ENCODE measurements at regions of chr19 and their contacts with region 1.

Region 1: GRCh38 chr19:41541990-41542584 is 33.9 kb upstream of the CEACAM21 start:
- DNase-seq: peak; percentile 51 to 77 (median 71)
- ATAC-seq: peak in 1 of 2 donors; percentile 35
- H3K4me3 ChIP-seq: no peak overlapping the region
- H3K27ac ChIP-seq: no peak overlapping the region
- H3K4me1 ChIP-seq: peaks cover 4% of the 10 kb centered on the region
- H3K27me3 ChIP-seq: no peaks in the 10 kb centered on the region

Region 2: GRCh38 chr19:41563854-41564514 is 21.9 kb after region 1 on chr19:
- intact Hi-C with region 1: loop called in 1 of 4 experiments (anchors 2 kb)
- DNase-seq: no peak
- ATAC-seq: no peak
- H3K4me3 ChIP-seq: no peak overlapping the region
- H3K27ac ChIP-seq: no peak overlapping the region
- H3K4me1 ChIP-seq: no peaks in the 10 kb centered on the region
- H3K27me3 ChIP-seq: no peaks in the 10 kb centered on the region